Right cardiac atrium (tissue), 5 donors: ENCODE measurements at regions of chr11 and their contacts with region 1.

Region 1: GRCh38 chr11:32176223-32176934 is 85.5 kb downstream of the RCN1 start:
- DNase-seq: peak; percentile 70 to 78 (median 73)
- ATAC-seq: peak; percentile 71 to 81
- H3K4me3 ChIP-seq: no peak overlapping the region
- H3K27ac ChIP-seq: no peak overlapping the region
- H3K4me1 ChIP-seq: no peaks in the 10 kb centered on the region
- H3K27me3 ChIP-seq: no peaks in the 10 kb centered on the region

Region 2: GRCh38 chr11:31240338-31240904 is 936.0 kb before region 1 on chr11:
- intact Hi-C with region 1: loop called in 2 of 4 experiments (anchors 10 kb)
- DNase-seq: no peak
- ATAC-seq: peak in 1 of 2 donors; percentile 50
- H3K4me3 ChIP-seq: no peak overlapping the region
- H3K27ac ChIP-seq: no peak overlapping the region
- H3K4me1 ChIP-seq: no peaks in the 10 kb centered on the region
- H3K27me3 ChIP-seq: no peaks in the 10 kb centered on the region

Region 3: GRCh38 chr11:31786996-31787685 is 389.2 kb before region 1 on chr11:
- intact Hi-C with region 1: no loop called
- DNase-seq: no peak
- ATAC-seq: no peak
- H3K4me3 ChIP-seq: no peak overlapping the region
- H3K27ac ChIP-seq: no peak overlapping the region
- H3K4me1 ChIP-seq: no peaks in the 10 kb centered on the region
- H3K27me3 ChIP-seq: no peaks in the 10 kb centered on the region

Region 4: GRCh38 chr11:32052218-32052617 is 124.2 kb before region 1 on chr11:
- intact Hi-C with region 1: loop called (anchors 1 to 5 kb)
- DNase-seq: peak; percentile 33 to 64 (median 52)
- ATAC-seq: peak in 1 of 2 donors; percentile 72
- H3K4me3 ChIP-seq: no peak overlapping the region
- H3K27ac ChIP-seq: no peak overlapping the region
- H3K4me1 ChIP-seq: no peaks in the 10 kb centered on the region
- H3K27me3 ChIP-seq: peaks cover under 1% of the 10 kb centered on the region

Region 5: DNA sequence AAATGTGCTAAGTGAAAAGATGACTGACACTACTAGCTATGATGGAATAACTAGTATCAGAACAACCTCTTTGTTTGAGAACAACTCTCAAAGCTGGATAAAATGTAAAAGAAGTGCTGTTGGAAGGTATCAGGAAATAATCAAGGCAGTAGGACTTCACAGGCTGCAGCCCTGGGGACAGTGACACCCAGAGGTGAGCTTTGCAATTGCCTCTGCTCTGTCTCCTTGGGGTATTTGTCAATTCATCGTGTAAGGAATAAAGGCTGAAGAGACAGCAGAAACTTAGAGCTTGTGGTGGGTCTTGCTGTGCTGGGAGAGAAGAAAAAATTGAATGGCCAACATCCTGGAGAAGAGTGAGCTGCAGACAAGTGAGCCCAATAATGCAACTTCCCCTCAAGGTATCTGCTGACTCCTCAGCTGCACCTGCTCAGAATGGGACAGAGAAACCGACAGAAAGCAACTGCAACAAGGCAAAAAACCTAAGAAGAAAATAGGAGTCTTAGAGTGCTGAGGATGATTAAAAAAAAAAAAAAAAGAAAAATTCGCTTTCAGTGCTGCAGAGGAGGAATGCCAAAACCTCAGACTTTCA is 55.6 kb after region 1 on chr11:
- intact Hi-C with region 1: no loop called
- DNase-seq: no peak
- ATAC-seq: no peak
- H3K4me3 ChIP-seq: no peak overlapping the region
- H3K27ac ChIP-seq: no peak overlapping the region
- H3K4me1 ChIP-seq: no peaks in the 10 kb centered on the region
- H3K27me3 ChIP-seq: no peaks in the 10 kb centered on the region

Region 6: DNA sequence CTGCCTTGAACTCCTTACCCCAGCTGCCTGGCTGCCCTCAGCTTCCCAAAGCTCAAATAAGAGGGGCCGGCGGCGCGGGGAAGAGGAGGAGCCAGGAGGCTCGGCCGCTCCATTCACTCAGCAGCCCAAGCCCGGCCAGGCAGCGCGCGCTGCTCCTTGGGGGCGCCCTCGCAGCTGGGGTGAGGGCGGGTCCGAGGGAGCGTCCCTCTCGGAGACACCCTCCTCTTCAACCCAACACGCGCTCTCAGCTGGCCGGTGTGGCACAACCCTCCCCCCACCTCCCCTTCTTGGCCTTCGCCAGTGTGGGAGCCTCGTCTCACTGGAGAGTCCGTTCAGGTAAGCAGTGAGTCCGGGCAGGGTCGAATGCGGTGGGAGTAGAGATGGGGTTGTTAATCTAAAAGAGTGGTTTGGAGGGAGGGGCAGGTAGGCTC is 259.1 kb after region 1 on chr11 and contains the start of gene WT1:
- intact Hi-C with region 1: no loop called
- DNase-seq: peak; percentile 82 to 89 (median 86)
- ATAC-seq: peak; percentile 88 to 89
- H3K4me3 ChIP-seq: peak within 1 kb of the TSS; percentile 52
- H3K27ac ChIP-seq: peak within 1 kb of the TSS; percentile 72
- H3K4me1 ChIP-seq: no peaks in the 10 kb centered on the region
- H3K27me3 ChIP-seq: no peaks in the 10 kb centered on the region
- total RNA-seq, gene WT1: 1.4 to 3.0 (median 2.0) TPM